Activated T-helper 2 cell treated with anti-CD3 and anti-CD28 coated beads, Interferon-gamma antibody, Interleukin-2, Interleukin-4, amounts not matched to agents 10 μg/mL and 5 μg/mL and 100 μg/mL, durations not matched to agents 14 hours and 24 hours and 36 hours (primary cell): ENCODE measurements at regions of chr13 and their contacts with region 1.

Region 1: GRCh38 chr13:34156841-34157365 is 339.0 kb downstream of the RFC3 start:
- DNase-seq: peak; percentile 67
- H3K4me3 Mint-ChIP-seq: peak overlapping the region; percentile 70
- H3K27ac Mint-ChIP-seq: peak overlapping the region; percentile 90
- H3K4me1 Mint-ChIP-seq: peaks cover 38% of the 10 kb centered on the region
- H3K27me3 Mint-ChIP-seq: peaks cover 17% of the 10 kb centered on the region

Region 2: DNA sequence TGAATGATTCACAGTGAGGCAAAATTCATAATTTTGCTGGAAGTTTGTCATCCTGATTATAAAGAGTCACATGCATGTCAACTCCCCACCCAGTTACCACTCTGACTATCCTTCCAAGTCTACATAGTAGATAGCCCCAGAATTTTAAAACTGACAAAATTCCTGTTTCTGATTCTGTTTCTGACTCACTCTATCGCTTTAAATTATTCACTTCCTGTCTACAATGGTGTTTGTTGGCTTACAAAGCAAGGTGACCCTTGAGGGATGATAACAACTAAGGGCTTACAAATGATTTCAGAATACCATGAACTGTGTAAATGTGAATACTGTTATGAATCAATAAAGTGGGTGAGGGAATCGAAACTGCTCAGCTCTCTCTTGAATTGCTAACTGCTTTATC is 1239.4 kb before region 1 on chr13:
- intact Hi-C with region 1: loop called (anchors 2 kb)
- DNase-seq: no peak
- H3K4me3 Mint-ChIP-seq: no peak overlapping the region
- H3K27ac Mint-ChIP-seq: peak overlapping the region; percentile 53
- H3K4me1 Mint-ChIP-seq: peaks cover 26% of the 10 kb centered on the region
- H3K27me3 Mint-ChIP-seq: no peaks in the 10 kb centered on the region

Region 3: DNA sequence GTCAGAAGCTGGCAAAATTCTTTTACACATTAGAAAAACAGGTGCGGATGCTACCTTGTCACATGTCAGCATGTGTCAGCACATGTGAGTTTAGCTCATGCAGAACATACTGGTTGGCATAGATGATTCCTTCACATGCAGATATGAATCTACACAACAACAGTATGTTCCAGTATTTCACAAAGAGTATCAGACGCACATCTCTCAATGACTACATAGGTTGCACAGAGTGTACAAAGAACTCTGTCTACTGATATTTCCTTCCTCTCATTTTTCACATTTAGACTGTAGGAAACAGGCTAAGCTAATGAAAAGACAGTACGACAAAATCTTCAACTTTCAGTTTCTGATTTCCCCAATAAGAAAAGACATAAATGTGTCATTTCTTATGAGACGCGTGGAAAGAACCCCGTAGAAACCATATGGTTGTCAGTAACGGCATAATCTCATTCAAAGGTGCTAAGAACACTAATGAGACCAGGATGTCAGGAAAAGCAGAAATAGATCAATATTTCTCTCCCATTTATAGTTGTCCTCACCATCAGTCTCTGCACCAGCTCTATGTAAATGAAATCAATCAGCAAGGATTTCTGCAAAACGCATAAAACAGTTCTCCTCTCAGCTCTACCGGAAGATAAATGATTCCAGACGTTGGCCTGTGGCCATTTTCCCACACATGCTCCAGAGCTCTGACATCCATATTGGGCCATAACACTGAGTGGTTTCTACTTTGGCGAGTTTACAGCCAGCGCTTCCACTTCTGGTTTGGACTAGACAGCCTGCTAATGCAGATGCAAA is 952.6 kb before region 1 on chr13:
- intact Hi-C with region 1: loop called (anchors 5 kb)
- DNase-seq: no peak
- H3K4me3 Mint-ChIP-seq: peak overlapping the region; percentile 66
- H3K27ac Mint-ChIP-seq: peak overlapping the region; percentile 76
- H3K4me1 Mint-ChIP-seq: peaks cover 45% of the 10 kb centered on the region
- H3K27me3 Mint-ChIP-seq: no peaks in the 10 kb centered on the region

Region 4: GRCh38 chr13:33817901-33818706 is 338.8 kb before region 1 on chr13 and contains the start of gene RFC3:
- intact Hi-C with region 1: loop called (anchors 5 kb)
- DNase-seq: peak; percentile 90
- H3K4me3 Mint-ChIP-seq: peak within 1 kb of the TSS; percentile 99
- H3K27ac Mint-ChIP-seq: peak within 1 kb of the TSS; percentile 96
- H3K4me1 Mint-ChIP-seq: peaks cover 37% of the 10 kb centered on the region
- H3K27me3 Mint-ChIP-seq: peaks cover 3% of the 10 kb centered on the region
- total RNA-seq, gene RFC3: 55.2 and 55.4 TPM in 2 replicates

Region 5: DNA sequence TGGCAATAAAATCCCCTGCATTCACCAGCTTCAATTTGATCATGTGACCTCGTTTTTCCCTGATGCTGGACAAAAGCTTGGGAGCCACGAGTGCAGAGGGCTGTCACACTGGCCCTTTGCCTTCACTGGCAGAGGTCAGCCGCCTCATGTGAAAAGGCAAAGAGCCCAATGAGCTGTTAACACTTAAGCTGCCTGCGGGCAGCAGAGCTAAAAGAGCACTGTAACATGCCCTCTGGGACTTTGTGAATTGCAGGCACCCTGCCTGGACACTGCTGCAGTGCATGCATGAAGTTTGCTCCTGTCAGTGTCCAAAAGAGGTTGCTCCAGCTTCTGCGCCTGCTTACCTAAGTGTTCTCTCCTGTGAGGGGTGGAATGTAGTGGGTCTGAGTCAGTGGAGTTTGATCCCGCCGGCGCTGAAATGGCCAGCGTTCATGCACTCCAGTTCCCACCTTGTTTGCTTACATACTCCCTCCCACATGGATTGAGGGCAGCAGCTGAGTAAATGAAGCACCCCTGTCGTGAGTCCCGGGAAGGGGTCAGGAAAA is 145.3 kb before region 1 on chr13:
- intact Hi-C with region 1: no loop called
- DNase-seq: no peak
- H3K4me3 Mint-ChIP-seq: no peak overlapping the region
- H3K27ac Mint-ChIP-seq: no peak overlapping the region
- H3K4me1 Mint-ChIP-seq: no peaks in the 10 kb centered on the region
- H3K27me3 Mint-ChIP-seq: peaks cover 2% of the 10 kb centered on the region

Region 6: GRCh38 chr13:34294483-34295129 is 137.7 kb after region 1 on chr13:
- intact Hi-C with region 1: no loop called
- DNase-seq: no peak
- H3K4me3 Mint-ChIP-seq: no peak overlapping the region
- H3K27ac Mint-ChIP-seq: no peak overlapping the region
- H3K4me1 Mint-ChIP-seq: no peaks in the 10 kb centered on the region
- H3K27me3 Mint-ChIP-seq: no peaks in the 10 kb centered on the region

Region 7: GRCh38 chr13:34941835-34942731 is 785.2 kb after region 1 on chr13 and contains the start of gene NBEA:
- intact Hi-C with region 1: loop called (anchors 5 kb)
- DNase-seq: peak; percentile 68
- H3K4me3 Mint-ChIP-seq: peak within 1 kb of the TSS; percentile 85
- H3K27ac Mint-ChIP-seq: no peak within 1 kb of the TSS
- H3K4me1 Mint-ChIP-seq: peaks cover 16% of the 10 kb centered on the region
- H3K27me3 Mint-ChIP-seq: peaks cover 52% of the 10 kb centered on the region
- total RNA-seq, gene NBEA: 0.14 and 0.23 TPM in 2 replicates